ENCODE measurements at regions of chr3 and their contacts with region 1.

Region 1: GRCh38 chr3:123060054-123060453 is 6.8 kb upstream of the PDIA5 start:
- DNase-seq: no peak
- H3K4me3 ChIP-seq: no peak overlapping the region
- H3K27ac ChIP-seq: no peak overlapping the region
- H3K4me1 ChIP-seq: no peaks in the 10 kb centered on the region
- H3K27me3 ChIP-seq: peaks cover 14% of the 10 kb centered on the region; the same call in 1 of the 2 replicates
- CTCF ChIP-seq: no peak

Region 2: GRCh38 chr3:122377975-122378374 is 682.1 kb before region 1 on chr3:
- CTCF ChIA-PET with region 1: interaction called, 16 read pairs
- POLR2A ChIA-PET with region 1: no interaction called
- intact Hi-C with region 1: no loop called
- DNase-seq: no peak
- H3K4me3 ChIP-seq: no peak overlapping the region
- H3K27ac ChIP-seq: no peak overlapping the region
- H3K4me1 ChIP-seq: peaks cover 7% of the 10 kb centered on the region; the same call in 1 of the 2 replicates
- H3K27me3 ChIP-seq: no peaks in the 10 kb centered on the region
- CTCF ChIP-seq: no peak

Region 3: GRCh38 chr3:122668930-122669730 is 390.9 kb before region 1 on chr3:
- CTCF ChIA-PET with region 1: no interaction called
- POLR2A ChIA-PET with region 1: no interaction called
- intact Hi-C with region 1: no loop called
- DNase-seq: peak in 1 of 2 experiments; percentile 73
- H3K4me3 ChIP-seq: no peak overlapping the region
- H3K27ac ChIP-seq: peak overlapping the region; percentile 33; the same call in 1 of the 2 replicates
- H3K4me1 ChIP-seq: 0 out of 2 replicates have a peak, but pooled peaks cover 12% of the 10 kb centered on the region
- H3K27me3 ChIP-seq: no peaks in the 10 kb centered on the region
- CTCF ChIP-seq: no peak

Measured in PC-9 (cell line).